Common myeloid progenitor, CD34-positive (primary cell): ENCODE measurements at regions of chr5 and their contacts with region 1.

Region 1: GRCh38 chr5:135466178-135467050 is 14.3 kb upstream of the TIFAB start:
- DNase-seq: peak; percentile 70 to 85 (median 82)
- H3K4me3 ChIP-seq: peak overlapping the region in 5 of 7 experiments; percentile 23 to 71 (median 58)
- H3K27ac ChIP-seq: no peak overlapping the region
- H3K4me1 ChIP-seq: peaks cover 0 to 21% (median 15%) of the 10 kb centered on the region in 4 experiments
- H3K27me3 ChIP-seq: peaks cover 2 to 47% (median 20%) of the 10 kb centered on the region in 5 experiments

Region 2: GRCh38 chr5:135053278-135053677 is 413.1 kb before region 1 on chr5:
- CTCF ChIA-PET with region 1: no interaction called
- POLR2A ChIA-PET with region 1: no interaction called
- DNase-seq: peak; percentile 54 to 84 (median 79)
- H3K4me3 ChIP-seq: no peak overlapping the region
- H3K27ac ChIP-seq: no peak overlapping the region
- H3K4me1 ChIP-seq: peaks cover 2 to 13% (median 10%) of the 10 kb centered on the region in 4 experiments
- H3K27me3 ChIP-seq: peaks cover 10 to 97% (median 41%) of the 10 kb centered on the region in 5 experiments

Region 3: DNA sequence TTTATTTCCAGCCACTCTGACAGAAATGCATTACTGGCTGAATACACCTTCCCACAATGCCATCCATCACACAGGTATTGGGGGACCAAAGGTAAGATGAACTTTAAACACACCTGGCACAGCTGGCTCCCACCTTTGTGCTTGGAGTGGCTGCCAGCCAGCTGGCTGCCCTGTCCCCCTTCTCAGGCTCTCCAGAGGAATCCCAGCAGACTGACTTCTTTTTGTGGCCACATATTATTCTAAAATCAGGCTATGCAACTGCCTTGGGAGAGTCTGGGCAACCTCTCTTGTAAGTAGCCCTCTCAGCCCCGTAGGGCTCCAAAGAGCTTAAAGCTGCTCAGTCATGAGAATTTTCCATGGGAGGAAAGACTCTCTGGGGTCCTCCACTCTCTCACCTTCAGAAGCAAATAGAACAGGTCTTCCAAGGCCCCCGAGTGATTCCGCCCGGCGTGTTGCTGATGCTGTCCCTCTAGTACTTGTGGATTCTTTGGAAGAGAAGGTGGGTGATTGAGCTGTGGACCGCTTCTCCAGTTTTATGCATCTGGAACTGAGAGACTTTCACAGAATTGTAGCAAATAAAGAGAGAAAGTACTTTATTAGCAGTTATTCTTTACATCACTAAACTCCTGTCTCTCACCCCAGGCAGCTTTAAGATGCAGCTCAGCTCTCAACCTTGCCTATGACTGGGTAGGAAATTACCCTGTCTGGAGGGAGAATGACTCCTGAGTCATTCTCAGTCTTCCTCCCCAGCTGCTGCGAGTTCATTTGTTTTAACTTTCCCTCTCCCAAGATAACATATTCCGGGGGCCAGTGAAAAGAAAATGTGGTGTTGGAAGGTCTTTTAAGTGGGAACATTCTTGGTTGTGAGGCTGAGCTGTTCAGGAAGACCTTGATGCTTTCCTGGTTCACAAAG is 272.9 kb before region 1 on chr5:
- CTCF ChIA-PET with region 1: no interaction called
- POLR2A ChIA-PET with region 1: no interaction called
- DNase-seq: no peak
- H3K4me3 ChIP-seq: no peak overlapping the region
- H3K27ac ChIP-seq: no peak overlapping the region
- H3K4me1 ChIP-seq: peaks cover 0 to 9% (median 3%) of the 10 kb centered on the region in 4 experiments
- H3K27me3 ChIP-seq: peaks cover 0 to 35% (median 21%) of the 10 kb centered on the region in 5 experiments

Region 4: GRCh38 chr5:135332519-135333150 is 133.8 kb before region 1 on chr5:
- CTCF ChIA-PET with region 1: no interaction called
- POLR2A ChIA-PET with region 1: no interaction called
- DNase-seq: peak; percentile 49 to 69 (median 67)
- H3K4me3 ChIP-seq: no peak overlapping the region
- H3K27ac ChIP-seq: no peak overlapping the region
- H3K4me1 ChIP-seq: no peaks in the 10 kb centered on the region
- H3K27me3 ChIP-seq: no peaks in the 10 kb centered on the region

Region 5: DNA sequence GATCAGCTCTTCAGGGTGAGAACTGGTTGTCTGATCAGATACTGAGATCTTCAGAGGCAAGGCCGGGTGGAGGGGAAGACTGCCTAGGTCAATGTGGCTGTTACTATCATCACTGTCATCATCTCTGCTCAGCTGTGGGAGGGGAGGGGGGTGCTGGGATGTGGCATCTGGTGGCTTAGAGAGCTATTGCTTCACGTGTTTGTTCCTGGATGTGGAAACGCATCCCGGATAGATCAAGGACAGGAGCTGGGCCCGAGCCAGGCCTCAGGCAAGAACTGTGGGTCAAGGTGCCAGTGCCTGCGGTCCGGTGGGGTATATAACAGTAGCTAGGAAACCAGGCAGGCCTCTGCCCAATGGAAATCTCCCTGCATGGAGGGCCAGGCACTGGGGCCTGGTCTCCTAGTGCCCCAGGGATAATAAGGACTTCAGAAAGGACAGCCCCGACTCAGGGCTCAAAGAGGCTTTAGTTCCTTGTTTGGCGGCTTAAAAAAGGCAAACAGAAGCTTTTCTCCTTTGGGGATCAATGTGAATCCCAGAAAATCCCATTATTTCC is 16.0 kb after region 1 on chr5:
- CTCF ChIA-PET with region 1: interaction called, 22 read pairs
- POLR2A ChIA-PET with region 1: no interaction called
- DNase-seq: peak in 1 of 3 donors; percentile 41
- H3K4me3 ChIP-seq: no peak overlapping the region
- H3K27ac ChIP-seq: no peak overlapping the region
- H3K4me1 ChIP-seq: peaks cover 0 to 27% (median 15%) of the 10 kb centered on the region in 4 experiments
- H3K27me3 ChIP-seq: peaks cover 0 to 31% (median 12%) of the 10 kb centered on the region in 5 experiments

Region 6: GRCh38 chr5:135508482-135509005 is 42.1 kb after region 1 on chr5:
- CTCF ChIA-PET with region 1: interaction called, 10 read pairs
- POLR2A ChIA-PET with region 1: no interaction called
- DNase-seq: peak in 2 of 3 donors; percentile 39 to 54
- H3K4me3 ChIP-seq: peak overlapping the region in 4 of 7 experiments; percentile 24 to 44 (median 40)
- H3K27ac ChIP-seq: no peak overlapping the region
- H3K4me1 ChIP-seq: peaks cover 0 to 7% (median 3%) of the 10 kb centered on the region in 4 experiments
- H3K27me3 ChIP-seq: peaks cover 10 to 57% (median 24%) of the 10 kb centered on the region in 5 experiments

Region 7: GRCh38 chr5:135560858-135561257 is 94.4 kb after region 1 on chr5:
- CTCF ChIA-PET with region 1: interaction called, 1,163 read pairs
- POLR2A ChIA-PET with region 1: no interaction called
- DNase-seq: peak; percentile 89 to 92 (median 90)
- H3K4me3 ChIP-seq: no peak overlapping the region
- H3K27ac ChIP-seq: no peak overlapping the region
- H3K4me1 ChIP-seq: peaks cover 0 to 6% (median 1%) of the 10 kb centered on the region in 4 experiments
- H3K27me3 ChIP-seq: peaks cover 5 to 36% (median 21%) of the 10 kb centered on the region in 5 experiments

Region 8: DNA sequence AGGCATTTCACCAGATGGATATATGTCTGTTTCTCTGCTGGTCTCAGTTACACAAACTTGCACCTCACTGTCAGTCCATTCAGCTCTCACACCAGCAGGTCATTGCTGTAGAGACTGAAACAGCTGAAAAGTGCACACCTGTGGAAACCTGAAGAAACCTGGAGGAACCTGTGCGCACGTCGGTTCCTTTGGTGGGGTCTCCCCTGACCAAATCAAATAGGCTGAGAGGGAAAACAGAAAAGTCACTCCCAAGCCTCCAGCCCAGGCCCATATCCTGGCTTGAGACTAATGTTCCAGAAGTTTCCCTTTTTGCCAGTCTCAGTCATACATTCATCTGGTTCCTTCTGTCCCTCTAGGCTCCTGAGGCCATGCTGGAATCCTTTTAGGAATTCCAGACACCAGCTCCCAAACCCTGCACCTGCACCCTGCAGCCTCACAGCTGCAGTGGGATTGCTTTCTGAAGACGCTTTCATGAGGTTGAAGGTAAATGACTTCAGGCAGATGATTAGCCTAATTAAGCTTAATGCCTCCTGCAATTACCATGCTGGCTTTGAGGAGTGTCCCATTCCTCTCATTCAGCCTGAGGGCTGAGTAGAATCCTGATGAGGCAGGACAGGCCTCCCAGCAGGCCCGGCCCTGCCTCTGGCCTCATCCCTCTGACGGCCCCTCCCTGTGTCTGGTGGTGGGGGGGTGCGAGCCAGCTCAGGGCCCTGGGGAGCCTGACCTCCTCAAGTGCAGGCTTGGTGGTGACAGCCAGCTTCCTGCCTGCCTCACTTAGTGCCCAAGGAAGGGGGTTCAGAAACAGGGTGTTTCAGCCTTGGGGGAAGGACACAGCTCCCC is 136.7 kb after region 1 on chr5:
- CTCF ChIA-PET with region 1: no interaction called
- POLR2A ChIA-PET with region 1: no interaction called
- DNase-seq: no peak
- H3K4me3 ChIP-seq: no peak overlapping the region
- H3K27ac ChIP-seq: no peak overlapping the region
- H3K4me1 ChIP-seq: no peaks in the 10 kb centered on the region
- H3K27me3 ChIP-seq: peaks cover 0 to 16% (median 3%) of the 10 kb centered on the region in 5 experiments